ENCODE measurements at regions of chr4 and their contacts with region 1.

Region 1: GRCh38 chr4:128653517-128654444 is 155.7 kb upstream of the JADE1 start:
- DNase-seq: peak; percentile 66
- H3K4me3 ChIP-seq: no peak overlapping the region
- H3K27ac ChIP-seq: peak overlapping the region; percentile 39 to 46
- H3K4me1 ChIP-seq: peaks cover 12% of the 10 kb centered on the region
- H3K27me3 ChIP-seq: no peaks in the 10 kb centered on the region
- CTCF ChIP-seq: no peak
- POLR2A ChIP-seq: no peak

Region 2: GRCh38 chr4:128590773-128591172 is 63.0 kb before region 1 on chr4:
- intact Hi-C with region 1: loop called (anchors 5 kb)
- DNase-seq: no peak
- H3K4me3 ChIP-seq: no peak overlapping the region
- H3K27ac ChIP-seq: peak overlapping the region in 1 of 2 donors; percentile 4
- H3K4me1 ChIP-seq: no peaks in the 10 kb centered on the region
- H3K27me3 ChIP-seq: no peaks in the 10 kb centered on the region
- CTCF ChIP-seq: no peak
- POLR2A ChIP-seq: no peak

Region 3: GRCh38 chr4:128608006-128608405 is 45.8 kb before region 1 on chr4:
- intact Hi-C with region 1: no loop called
- DNase-seq: no peak
- H3K4me3 ChIP-seq: no peak overlapping the region
- H3K27ac ChIP-seq: no peak overlapping the region
- H3K4me1 ChIP-seq: no peaks in the 10 kb centered on the region
- H3K27me3 ChIP-seq: no peaks in the 10 kb centered on the region
- CTCF ChIP-seq: no peak
- POLR2A ChIP-seq: no peak